Right cardiac atrium (tissue), 5 donors: ENCODE measurements at regions of chr7 and their contacts with region 1.

Region 1: DNA sequence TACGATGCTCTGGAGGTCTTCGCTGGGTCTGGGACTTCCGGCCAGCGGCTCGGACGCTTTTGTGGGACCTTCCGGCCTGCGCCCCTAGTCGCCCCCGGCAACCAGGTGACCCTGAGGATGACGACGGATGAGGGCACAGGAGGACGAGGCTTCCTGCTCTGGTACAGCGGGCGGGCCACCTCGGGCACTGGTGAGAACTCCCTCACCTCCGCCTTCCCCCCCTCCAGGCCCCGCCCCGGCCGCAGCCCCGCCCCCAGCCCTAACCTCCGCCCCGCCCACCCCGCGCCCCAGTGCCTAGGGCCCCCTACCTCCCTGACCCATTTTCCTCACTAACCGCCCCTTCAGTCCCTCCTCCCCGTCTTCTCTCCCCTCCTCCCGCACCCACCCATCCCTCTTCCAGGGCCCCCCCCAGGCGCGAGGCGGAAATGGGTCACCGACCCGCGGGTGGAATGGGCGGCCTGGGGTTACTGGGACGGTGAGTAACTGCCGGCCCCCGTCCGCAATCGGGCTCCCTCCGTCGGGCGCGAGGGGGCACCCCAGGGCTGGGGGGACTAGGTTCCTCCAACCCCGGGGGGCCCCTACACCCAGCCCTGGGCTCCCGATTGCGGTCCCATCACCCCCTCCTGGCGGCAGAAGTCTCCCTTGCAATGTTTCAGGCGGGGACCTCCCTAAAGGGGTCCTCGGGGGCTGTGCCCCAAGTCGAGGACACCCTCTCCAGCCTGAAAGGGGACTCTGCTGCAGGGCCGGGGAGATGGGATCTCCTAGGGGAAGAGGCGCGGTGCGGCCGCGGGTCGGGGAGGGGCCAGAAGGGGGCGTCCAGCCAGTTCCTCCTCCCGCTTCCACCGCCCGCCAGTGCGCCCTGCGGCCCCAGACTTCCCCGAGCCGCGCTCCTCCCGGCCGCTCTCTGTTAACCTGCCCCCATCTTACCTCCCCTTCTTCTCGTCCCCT is 2.1 kb downstream of the PCOLCE start:
- DNase-seq: peak; percentile 80 to 94 (median 93)
- ATAC-seq: peak; percentile 78 to 84
- H3K4me3 ChIP-seq: peak overlapping the region; percentile 89
- H3K27ac ChIP-seq: peak overlapping the region; percentile 85
- H3K4me1 ChIP-seq: no peaks in the 10 kb centered on the region
- H3K27me3 ChIP-seq: no peaks in the 10 kb centered on the region

Region 2: GRCh38 chr7:99997545-99998137 is 606.7 kb before region 1 on chr7:
- intact Hi-C with region 1: no loop called
- DNase-seq: peak; percentile 41 to 84 (median 82)
- ATAC-seq: peak; percentile 78 to 79
- H3K4me3 ChIP-seq: peak overlapping the region; percentile 54
- H3K27ac ChIP-seq: peak overlapping the region; percentile 48
- H3K4me1 ChIP-seq: no peaks in the 10 kb centered on the region
- H3K27me3 ChIP-seq: no peaks in the 10 kb centered on the region

Region 3: GRCh38 chr7:100049441-100050311 is 554.6 kb before region 1 on chr7 and contains the start of gene ZSCAN21:
- intact Hi-C with region 1: no loop called
- DNase-seq: peak; percentile 89 to 96 (median 96)
- ATAC-seq: peak; percentile 98 to 99
- H3K4me3 ChIP-seq: peak within 1 kb of the TSS; percentile 82
- H3K27ac ChIP-seq: peak within 1 kb of the TSS; percentile 91
- H3K4me1 ChIP-seq: no peaks in the 10 kb centered on the region
- H3K27me3 ChIP-seq: no peaks in the 10 kb centered on the region
- total RNA-seq, gene ZSCAN21: 7.1 to 8.6 (median 7.7) TPM

Region 4: GRCh38 chr7:100680167-100680575 is 75.9 kb after region 1 on chr7:
- intact Hi-C with region 1: loop called in 1 of 4 experiments (anchors 10 kb)
- DNase-seq: peak; percentile 71 to 82 (median 72)
- ATAC-seq: peak; percentile 41 to 51
- H3K4me3 ChIP-seq: no peak overlapping the region
- H3K27ac ChIP-seq: peak overlapping the region; percentile 21
- H3K4me1 ChIP-seq: peaks cover 2% of the 10 kb centered on the region
- H3K27me3 ChIP-seq: no peaks in the 10 kb centered on the region

Region 5: DNA sequence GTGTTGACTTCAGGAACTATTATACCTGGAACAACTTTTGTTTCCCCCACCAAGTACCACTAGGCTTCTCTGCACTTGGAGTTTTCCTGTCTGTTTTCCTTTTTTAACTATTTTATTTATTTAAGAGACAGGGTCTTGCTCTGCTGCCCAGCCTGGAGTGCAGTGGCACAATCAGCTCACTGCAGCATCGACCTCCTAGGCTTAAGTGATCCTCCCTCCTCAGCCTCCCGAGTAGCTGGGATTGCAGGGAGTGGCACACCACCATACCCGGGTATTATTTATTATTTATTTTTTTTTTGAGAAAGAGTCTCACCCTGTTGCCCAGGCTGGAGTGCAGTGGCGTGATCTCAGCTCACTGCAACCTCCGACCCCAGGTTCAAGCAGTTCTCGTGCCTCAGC is 91.8 kb after region 1 on chr7:
- intact Hi-C with region 1: no loop called
- DNase-seq: no peak
- ATAC-seq: no peak
- H3K4me3 ChIP-seq: no peak overlapping the region
- H3K27ac ChIP-seq: no peak overlapping the region
- H3K4me1 ChIP-seq: peaks cover 3% of the 10 kb centered on the region
- H3K27me3 ChIP-seq: no peaks in the 10 kb centered on the region

Region 6: DNA sequence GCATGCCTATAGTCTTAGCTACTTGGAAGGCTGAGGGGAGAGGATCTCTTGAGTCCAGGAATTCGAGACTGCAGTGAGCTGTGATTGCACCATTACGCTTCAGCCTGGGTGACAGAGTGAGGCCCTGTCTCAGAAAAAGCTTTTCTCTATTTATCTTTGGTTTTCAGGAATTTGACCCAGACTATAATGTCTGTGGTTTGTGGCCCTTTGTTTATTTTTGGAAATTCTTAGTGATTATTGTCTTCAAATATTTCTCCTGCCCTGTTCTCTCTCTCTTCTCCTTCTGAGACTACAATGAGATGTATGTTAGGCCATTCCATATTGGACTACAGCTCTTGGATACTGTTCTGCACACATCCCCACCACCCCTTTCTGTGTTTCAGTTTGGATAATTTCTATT is 369.7 kb after region 1 on chr7:
- intact Hi-C with region 1: no loop called
- DNase-seq: no peak
- ATAC-seq: no peak
- H3K4me3 ChIP-seq: no peak overlapping the region
- H3K27ac ChIP-seq: no peak overlapping the region
- H3K4me1 ChIP-seq: no peaks in the 10 kb centered on the region
- H3K27me3 ChIP-seq: no peaks in the 10 kb centered on the region